ENCODE measurements at regions of chr3 and their contacts with region 1.

Region 1: DNA sequence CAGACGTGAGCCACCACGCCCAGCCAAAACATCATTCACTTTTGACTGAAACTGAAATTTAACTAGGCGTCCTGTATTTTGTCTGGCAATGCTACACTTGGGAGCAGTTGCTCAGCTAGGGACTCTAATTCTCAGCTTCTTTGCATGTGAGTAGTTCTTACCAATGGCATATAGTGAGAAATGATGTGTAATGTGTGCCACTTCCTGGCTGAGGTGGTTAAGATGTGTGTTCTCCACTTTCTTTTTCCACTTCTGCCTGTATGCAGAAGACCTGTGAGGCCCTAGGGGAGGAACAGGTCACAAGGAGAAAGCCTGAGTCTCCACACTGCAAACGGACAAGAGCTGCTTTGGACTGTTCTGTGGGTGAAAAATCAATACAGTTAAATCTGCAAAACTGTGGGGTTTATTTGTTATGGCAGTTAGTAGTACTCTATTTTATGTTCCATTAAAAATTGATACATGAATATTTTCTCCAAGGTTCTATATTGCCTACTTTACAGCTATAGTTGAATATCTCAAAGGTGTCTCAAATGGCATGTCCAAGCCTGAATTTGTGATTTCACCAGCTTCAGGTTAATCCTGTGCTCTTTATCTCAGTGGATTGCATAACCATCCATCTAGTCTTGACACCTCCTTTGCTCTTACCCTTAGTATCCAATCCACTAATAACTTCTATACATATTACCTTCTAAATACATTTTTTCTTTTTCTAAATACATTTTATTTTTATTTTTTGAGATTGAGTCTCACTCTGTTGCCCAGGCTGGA is 59.3 kb downstream of the NR1D2 start:
- DNase-seq: no peak
- ATAC-seq: no peak
- H3K4me3 ChIP-seq: no peak overlapping the region
- H3K4me1 ChIP-seq: no peaks in the 10 kb centered on the region
- CTCF ChIP-seq: no peak

Region 2: DNA sequence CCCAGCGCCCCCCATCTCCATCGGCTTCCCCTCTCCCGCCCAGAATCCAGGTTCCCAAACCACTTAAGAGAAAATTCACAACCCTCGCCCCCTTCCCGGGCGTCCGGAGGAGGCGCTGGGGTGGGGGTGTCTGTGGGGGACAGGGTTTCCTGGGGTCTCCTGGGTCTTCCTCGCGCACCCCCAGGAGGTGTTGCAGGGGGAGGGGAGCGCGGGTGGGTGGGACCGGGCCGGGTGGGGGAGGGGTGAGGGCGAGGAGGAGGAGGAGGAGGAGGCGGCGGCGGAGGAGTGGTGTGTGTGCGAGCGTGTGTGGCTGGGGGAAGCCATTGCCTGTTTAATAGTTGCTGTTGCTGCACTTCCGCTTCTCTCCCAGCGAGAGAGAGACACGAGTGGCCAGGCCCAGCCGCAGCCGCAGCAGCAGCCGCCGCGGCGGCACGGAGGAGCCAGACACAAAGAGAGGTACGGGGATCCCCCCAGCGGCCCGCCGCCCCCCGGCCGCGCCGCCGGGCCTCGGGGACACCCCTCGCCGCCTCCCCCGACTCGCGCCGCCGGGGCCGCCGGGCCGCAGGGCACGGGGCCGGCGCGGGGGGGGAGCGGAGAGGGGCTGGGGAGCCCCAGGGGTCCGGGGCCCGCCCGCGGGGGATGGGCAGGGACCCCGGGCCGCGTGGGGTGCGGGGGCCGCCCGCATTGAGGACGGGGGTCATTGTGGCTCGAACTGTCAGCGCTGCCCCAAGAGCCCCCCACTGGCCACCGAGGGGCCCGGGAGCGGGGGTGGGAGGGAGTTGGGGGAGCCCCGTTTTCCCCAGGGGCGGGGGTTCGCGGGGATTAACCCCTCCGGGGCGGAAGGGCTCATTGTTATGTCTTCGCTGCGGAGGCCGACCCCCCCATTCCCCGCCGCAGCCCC is 198.5 kb before region 1 on chr3 and contains the start of gene UBE2E1:
- intact Hi-C with region 1: no loop called
- DNase-seq: peak; percentile 78 to 86 (median 80)
- ATAC-seq: peak; percentile 75
- H3K4me3 ChIP-seq: peak within 1 kb of the TSS; percentile 88
- H3K4me1 ChIP-seq: peaks cover 28% of the 10 kb centered on the region
- CTCF ChIP-seq: no peak
- total RNA-seq, gene UBE2E1: 84.7 to 111 (median 86.8) TPM

Region 3: GRCh38 chr3:24237971-24238767 is 233.8 kb after region 1 on chr3:
- intact Hi-C with region 1: loop called in 1 of 2 experiments (anchors 10 kb)
- DNase-seq: peak in 1 of 3 donors; percentile 73
- ATAC-seq: peak; percentile 94
- H3K4me3 ChIP-seq: no peak overlapping the region
- H3K4me1 ChIP-seq: peaks cover 16% of the 10 kb centered on the region
- CTCF ChIP-seq: peak; percentile 20

Region 4: DNA sequence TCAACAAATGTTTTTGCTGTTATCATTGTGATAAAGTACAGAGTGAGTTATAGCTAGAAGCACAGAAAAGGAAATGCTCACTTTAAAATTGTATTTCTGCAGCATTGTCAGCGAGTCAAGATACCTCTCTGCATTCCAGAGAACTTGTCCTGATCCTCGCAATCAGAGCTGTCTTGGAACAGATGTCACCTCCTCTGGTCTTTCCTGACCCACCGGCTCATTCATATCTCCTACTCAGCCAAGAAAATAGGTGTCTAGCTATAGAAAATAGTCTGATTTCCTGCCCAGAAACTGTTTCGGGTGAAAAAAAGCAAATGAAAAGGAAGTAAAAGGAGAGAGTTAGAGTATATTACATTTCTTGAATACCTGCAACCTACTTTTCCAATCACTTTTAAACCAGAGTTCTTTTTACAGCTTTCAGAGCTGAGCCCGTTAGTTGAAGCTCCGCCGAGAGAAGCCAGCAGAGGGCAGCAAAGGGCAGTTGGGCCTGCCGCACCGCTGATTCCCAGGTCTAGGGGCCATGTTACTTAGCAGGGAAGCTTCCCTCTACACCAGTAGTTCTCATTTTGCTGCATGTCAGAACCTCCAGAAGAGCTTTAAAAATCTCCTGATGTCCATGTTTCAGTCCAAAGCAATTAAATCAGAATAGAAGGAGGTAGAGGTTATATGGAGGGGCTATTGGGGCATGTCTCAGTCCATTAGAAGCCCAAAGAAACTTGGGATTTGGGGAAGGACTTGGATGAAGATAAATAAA is 676.0 kb after region 1 on chr3:
- intact Hi-C with region 1: loop called (anchors 5 to 10 kb)
- DNase-seq: peak; percentile 50 to 80 (median 76)
- ATAC-seq: peak; percentile 85
- H3K4me3 ChIP-seq: no peak overlapping the region
- H3K4me1 ChIP-seq: no peaks in the 10 kb centered on the region
- CTCF ChIP-seq: peak; percentile 67

Measured in mucosa of descending colon (tissue), 3 donors.